Heart left ventricle (tissue), 16 donors: ENCODE measurements at regions of chr6 and their contacts with region 1.

Region 1: GRCh38 chr6:21593412-21593926 is at the start of gene SOX4:
- DNase-seq: peak; percentile 93 to 97 (median 95)
- ATAC-seq: peak; percentile 77 to 90 (median 85)
- H3K4me3 ChIP-seq: peak within 1 kb of the TSS; percentile 49 to 93 (median 79)
- H3K27ac ChIP-seq: peak within 1 kb of the TSS; percentile 74 to 92 (median 90)
- H3K4me1 ChIP-seq: peaks cover 0 to 26% (median 14%) of the 10 kb centered on the region in 12 donors
- H3K27me3 ChIP-seq: no peaks in the 10 kb centered on the region
- CTCF ChIP-seq: no peak
- POLR2A ChIP-seq: peak in 1 of 2 donors; percentile 93
- total RNA-seq, gene SOX4: 1.9 to 20.3 (median 8.0) TPM

Region 2: DNA sequence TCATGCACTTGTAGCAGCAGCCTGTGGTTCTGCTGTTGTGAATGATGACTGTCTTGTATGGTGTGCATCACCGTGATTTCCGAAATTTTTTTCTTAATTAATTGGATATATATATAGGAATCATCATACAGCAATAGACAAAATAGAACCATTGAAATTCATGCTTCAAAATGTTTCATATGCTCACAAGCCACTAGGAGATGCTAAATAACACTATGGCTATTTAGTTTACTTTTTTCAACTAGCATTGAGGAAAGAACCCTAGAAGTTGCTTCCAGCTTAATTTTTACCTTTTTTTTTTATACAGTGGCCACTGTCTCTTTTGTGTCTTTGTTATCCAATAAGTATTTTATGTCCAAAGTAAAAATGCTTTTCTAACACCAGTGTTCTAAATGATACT is 573.9 kb before region 1 on chr6:
- intact Hi-C with region 1: loop called in 1 of 10 experiments (anchors 10 kb)
- DNase-seq: no peak
- ATAC-seq: no peak
- H3K4me3 ChIP-seq: no peak overlapping the region
- H3K27ac ChIP-seq: no peak overlapping the region
- H3K4me1 ChIP-seq: peaks cover 0 to 5% (median 0%) of the 10 kb centered on the region in 12 donors
- H3K27me3 ChIP-seq: no peaks in the 10 kb centered on the region
- CTCF ChIP-seq: peak in 2 of 12 donors; percentile 8 to 32
- POLR2A ChIP-seq: no peak

Region 3: GRCh38 chr6:21664314-21665109 is 71.0 kb after region 1 on chr6:
- intact Hi-C with region 1: loop called in 5 of 10 experiments (anchors 2 to 5 kb)
- DNase-seq: peak; percentile 39 to 65 (median 48)
- ATAC-seq: peak in 3 of 4 donors; percentile 57 to 67 (median 61)
- H3K4me3 ChIP-seq: peak overlapping the region; percentile 46 to 69 (median 56)
- H3K27ac ChIP-seq: peak overlapping the region in 9 of 12 donors; percentile 20 to 62 (median 52)
- H3K4me1 ChIP-seq: peaks cover 0 to 39% (median 17%) of the 10 kb centered on the region in 12 donors
- H3K27me3 ChIP-seq: peaks cover 0 to 53% (median 24%) of the 10 kb centered on the region in 9 donors
- CTCF ChIP-seq: no peak
- POLR2A ChIP-seq: no peak

Region 4: GRCh38 chr6:21953831-21954801 is 360.6 kb after region 1 on chr6:
- intact Hi-C with region 1: loop called in 1 of 10 experiments (anchors 5 kb)
- DNase-seq: peak in 2 of 5 donors; percentile 22 to 30
- ATAC-seq: peak in 3 of 4 donors; percentile 67 to 89 (median 76)
- H3K4me3 ChIP-seq: no peak overlapping the region
- H3K27ac ChIP-seq: peak overlapping the region in 9 of 12 donors; percentile 6 to 61 (median 37)
- H3K4me1 ChIP-seq: peaks cover 0 to 41% (median 19%) of the 10 kb centered on the region in 12 donors
- H3K27me3 ChIP-seq: no peaks in the 10 kb centered on the region
- CTCF ChIP-seq: no peak
- POLR2A ChIP-seq: no peak

Region 5: DNA sequence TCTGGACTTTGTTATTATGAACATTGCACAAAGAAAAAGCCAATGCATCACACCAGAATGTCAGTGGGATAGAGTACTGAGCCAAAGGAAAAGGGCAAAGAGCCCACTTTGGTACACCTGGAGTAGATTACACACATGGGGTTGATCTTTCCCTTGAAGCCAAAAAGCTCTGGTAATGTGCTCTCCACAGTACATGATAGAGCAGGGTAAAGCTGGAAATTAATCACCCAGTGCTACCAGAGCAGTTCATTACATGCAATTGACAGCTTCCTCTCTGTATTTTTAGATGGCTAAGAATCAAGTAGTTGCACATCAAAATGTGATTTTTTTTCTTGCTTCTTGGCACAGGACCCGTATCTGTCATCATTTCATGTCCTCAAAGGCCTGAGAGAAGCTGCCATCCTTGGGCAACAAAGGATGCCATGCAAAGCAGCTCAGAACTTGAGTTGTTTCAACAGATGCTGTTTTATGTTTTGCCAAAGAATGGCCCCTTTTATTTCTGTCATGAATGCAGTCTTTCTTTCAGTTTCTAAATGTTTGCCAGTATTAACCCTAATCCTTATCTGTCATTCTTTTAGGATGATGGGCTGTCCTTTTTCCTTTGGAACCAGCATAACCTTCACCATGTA is 1064.0 kb after region 1 on chr6:
- intact Hi-C with region 1: loop called in 1 of 10 experiments (anchors 10 kb)
- DNase-seq: no peak
- ATAC-seq: peak in 2 of 4 donors; percentile 34 to 44
- H3K4me3 ChIP-seq: no peak overlapping the region
- H3K27ac ChIP-seq: peak overlapping the region in 3 of 12 donors; percentile 11 to 65 (median 26)
- H3K4me1 ChIP-seq: peaks cover 0 to 27% (median 8%) of the 10 kb centered on the region in 12 donors
- H3K27me3 ChIP-seq: no peaks in the 10 kb centered on the region
- CTCF ChIP-seq: no peak
- POLR2A ChIP-seq: no peak

Region 6: GRCh38 chr6:22873513-22874136 is 1280.2 kb after region 1 on chr6:
- intact Hi-C with region 1: loop called in 1 of 10 experiments (anchors 10 kb)
- DNase-seq: no peak
- ATAC-seq: peak in 2 of 4 donors; percentile 56 to 79
- H3K4me3 ChIP-seq: no peak overlapping the region
- H3K27ac ChIP-seq: peak overlapping the region in 7 of 12 donors; percentile 16 to 51 (median 44)
- H3K4me1 ChIP-seq: peaks cover 0 to 26% (median 8%) of the 10 kb centered on the region in 12 donors
- H3K27me3 ChIP-seq: no peaks in the 10 kb centered on the region
- CTCF ChIP-seq: no peak
- POLR2A ChIP-seq: no peak